Right ventricle myocardium inferior (tissue), 1 donor: ENCODE measurements at regions of chr14 and their contacts with region 1.

Region 1: DNA sequence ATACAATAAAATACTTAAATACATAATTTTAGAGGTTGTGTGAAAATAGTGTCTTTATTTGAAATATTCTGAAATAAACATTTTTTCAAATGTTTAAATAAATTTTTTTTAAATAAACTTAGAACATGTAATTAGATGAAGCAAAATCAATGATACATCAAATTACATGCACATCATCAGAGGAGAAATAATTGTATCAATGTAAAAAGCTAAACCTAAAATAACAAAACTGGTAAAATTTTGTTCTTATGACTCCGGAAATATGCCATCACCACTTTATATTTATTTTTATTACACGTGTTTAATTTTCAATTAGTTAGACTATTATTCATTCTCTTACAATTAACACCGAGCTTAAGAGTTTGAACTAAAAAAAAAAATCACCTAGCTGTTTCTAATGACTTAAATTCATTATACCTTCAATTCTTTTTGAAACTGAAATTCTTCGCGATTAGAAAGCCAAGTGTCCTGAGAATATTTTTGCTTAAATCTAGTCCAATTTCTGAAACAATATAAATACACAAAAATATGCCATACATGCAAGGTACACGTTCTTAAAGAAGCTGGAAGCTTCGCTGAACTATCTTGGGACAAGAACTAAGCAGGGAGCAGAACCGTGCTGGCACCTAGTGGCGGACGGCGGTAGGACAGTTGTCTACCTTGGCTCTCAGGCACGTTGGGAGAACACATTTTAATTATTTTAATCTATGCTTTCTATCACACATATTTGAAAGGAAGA is 230.5 kb downstream of the SLC25A21 start:
- DNase-seq: peak; percentile 62
- ATAC-seq: peak; percentile 74

Region 2: GRCh38 chr14:36373982-36374673 is 567.8 kb before region 1 on chr14:
- intact Hi-C with region 1: no loop called
- DNase-seq: no peak
- ATAC-seq: peak; percentile 46

Region 3: DNA sequence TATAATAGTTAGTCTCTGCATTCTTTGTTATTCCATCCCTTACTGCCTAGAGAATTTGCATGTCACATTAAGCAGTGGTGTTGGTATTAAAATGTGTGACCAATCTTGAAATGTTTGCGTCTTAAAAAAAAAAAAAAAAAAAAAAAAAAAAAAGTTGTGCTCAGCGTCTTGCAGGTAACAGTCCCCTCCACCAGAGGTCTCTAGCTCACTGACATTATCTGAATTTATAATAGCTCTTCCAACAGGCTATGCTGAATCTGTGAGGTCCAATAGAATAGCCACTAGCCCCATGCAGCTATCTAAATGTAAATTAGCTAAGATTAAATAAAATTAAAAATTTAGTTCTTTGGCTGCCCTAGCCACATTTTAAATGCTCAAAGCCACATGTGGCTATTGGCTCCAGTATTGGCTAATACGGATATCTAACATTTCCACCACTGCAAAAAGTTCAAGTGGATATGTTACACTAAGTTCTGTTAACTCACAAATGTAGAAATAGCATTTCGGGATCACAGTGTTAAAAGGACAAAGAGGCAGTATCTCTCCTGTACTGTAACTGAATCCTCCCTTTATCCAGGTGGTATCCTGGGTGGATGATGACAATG is 388.2 kb before region 1 on chr14:
- intact Hi-C with region 1: loop called (anchors 2 kb)
- DNase-seq: no peak
- ATAC-seq: no peak

Region 4: GRCh38 chr14:36647824-36648753 is 293.9 kb before region 1 on chr14:
- intact Hi-C with region 1: loop called (anchors 2 kb)
- DNase-seq: no peak
- ATAC-seq: peak; percentile 75

Region 5: GRCh38 chr14:36852981-36853691 is 88.8 kb before region 1 on chr14:
- intact Hi-C with region 1: no loop called
- DNase-seq: peak; percentile 65
- ATAC-seq: peak; percentile 72

Region 6: GRCh38 chr14:36874396-36875161 is 67.4 kb before region 1 on chr14:
- intact Hi-C with region 1: no loop called
- DNase-seq: no peak
- ATAC-seq: no peak

Region 7: DNA sequence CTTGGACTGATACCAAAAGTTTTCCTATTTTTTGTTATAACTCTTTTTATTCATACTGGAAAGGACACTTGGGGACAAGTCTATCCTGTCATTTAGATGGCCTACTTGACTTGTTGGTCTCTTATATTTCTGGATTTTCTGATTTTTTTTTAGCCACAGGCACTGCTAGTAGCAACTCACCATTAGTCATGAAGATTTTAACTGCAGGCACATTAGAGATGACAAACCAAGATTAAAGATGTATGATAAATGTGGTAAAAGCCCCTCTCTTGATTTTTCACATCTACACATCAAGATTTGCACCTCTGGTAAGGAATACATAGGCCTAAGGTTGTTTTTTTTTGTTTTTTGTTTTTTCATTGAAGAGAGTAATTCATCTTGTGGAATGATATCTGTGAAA is 13.4 kb after region 1 on chr14:
- intact Hi-C with region 1: no loop called
- DNase-seq: no peak
- ATAC-seq: no peak